Activated CD4-positive, alpha-beta T cell treated with anti-CD3 and anti-CD28 coated beads, Interleukin-2, amount 10 ng/mL, durations not matched to agents 24 days and 14 days (primary cell): ENCODE measurements at regions of chr12 and their contacts with region 1.

Region 1: DNA sequence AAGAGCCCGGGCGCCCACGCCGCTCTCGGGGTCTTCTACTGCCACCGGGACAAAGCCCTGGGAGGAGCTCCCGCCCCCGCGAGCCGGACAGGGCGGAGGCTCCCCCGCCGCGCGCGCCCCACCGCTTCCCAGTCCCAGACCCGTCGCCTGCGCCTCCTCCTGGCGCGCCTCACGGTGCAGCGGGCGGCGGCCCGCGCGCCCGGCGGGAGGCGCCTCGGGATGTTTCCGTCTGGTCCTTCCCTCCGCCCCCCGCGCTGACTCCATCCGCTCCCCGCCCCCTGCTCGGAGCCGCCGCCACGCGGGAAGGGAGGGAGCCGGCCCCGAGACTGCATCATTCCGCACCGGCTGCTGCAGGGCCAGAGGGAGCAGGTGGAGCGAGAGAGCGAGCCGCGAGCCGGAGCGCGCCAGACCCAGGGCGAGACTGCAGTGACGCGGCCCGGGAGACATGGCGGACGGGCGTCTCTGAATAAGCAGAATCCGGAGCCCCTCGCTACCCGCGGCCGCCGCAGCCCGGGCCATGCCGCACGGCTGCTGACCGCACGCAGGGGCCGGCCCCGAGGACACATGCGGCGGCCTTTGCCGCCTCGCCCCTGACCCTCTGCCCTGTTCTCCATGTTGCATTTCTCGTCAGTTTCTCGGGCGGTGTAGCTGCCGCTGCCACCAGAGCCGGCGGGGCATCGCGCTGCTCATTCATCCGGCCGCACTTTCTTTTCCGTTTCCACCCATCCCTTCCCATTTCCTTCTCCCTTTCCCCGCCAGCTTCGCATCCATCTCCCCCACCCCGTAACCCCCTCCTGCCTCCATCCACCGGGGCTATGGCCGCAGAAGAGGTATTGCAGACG is at the start of gene BICD1:
- DNase-seq: peak; percentile 94
- H3K4me3 Mint-ChIP-seq: peak within 1 kb of the TSS; percentile 99
- H3K27ac Mint-ChIP-seq: peak within 1 kb of the TSS; percentile 92
- H3K4me1 Mint-ChIP-seq: peaks cover 23% of the 10 kb centered on the region
- H3K27me3 Mint-ChIP-seq: peaks cover 14% of the 10 kb centered on the region
- total RNA-seq, gene BICD1: 16.0 and 18.2 TPM in 2 replicates

Region 2: GRCh38 chr12:31585271-31585670 is 521.5 kb before region 1 on chr12:
- intact Hi-C with region 1: no loop called
- DNase-seq: no peak
- H3K4me3 Mint-ChIP-seq: no peak overlapping the region
- H3K27ac Mint-ChIP-seq: no peak overlapping the region
- H3K4me1 Mint-ChIP-seq: peaks cover 4% of the 10 kb centered on the region
- H3K27me3 Mint-ChIP-seq: peaks cover 43% of the 10 kb centered on the region

Region 3: GRCh38 chr12:31659087-31659933 is 447.4 kb before region 1 on chr12 and contains the start of gene ETFBKMT:
- intact Hi-C with region 1: loop called (anchors 1 kb)
- DNase-seq: peak; percentile 98
- H3K4me3 Mint-ChIP-seq: peak within 1 kb of the TSS; percentile 93
- H3K27ac Mint-ChIP-seq: peak within 1 kb of the TSS; percentile 99
- H3K4me1 Mint-ChIP-seq: peaks cover 15% of the 10 kb centered on the region
- H3K27me3 Mint-ChIP-seq: no peaks in the 10 kb centered on the region
- total RNA-seq, gene ETFBKMT: 0.52 and 0.84 TPM in 2 replicates

Region 4: DNA sequence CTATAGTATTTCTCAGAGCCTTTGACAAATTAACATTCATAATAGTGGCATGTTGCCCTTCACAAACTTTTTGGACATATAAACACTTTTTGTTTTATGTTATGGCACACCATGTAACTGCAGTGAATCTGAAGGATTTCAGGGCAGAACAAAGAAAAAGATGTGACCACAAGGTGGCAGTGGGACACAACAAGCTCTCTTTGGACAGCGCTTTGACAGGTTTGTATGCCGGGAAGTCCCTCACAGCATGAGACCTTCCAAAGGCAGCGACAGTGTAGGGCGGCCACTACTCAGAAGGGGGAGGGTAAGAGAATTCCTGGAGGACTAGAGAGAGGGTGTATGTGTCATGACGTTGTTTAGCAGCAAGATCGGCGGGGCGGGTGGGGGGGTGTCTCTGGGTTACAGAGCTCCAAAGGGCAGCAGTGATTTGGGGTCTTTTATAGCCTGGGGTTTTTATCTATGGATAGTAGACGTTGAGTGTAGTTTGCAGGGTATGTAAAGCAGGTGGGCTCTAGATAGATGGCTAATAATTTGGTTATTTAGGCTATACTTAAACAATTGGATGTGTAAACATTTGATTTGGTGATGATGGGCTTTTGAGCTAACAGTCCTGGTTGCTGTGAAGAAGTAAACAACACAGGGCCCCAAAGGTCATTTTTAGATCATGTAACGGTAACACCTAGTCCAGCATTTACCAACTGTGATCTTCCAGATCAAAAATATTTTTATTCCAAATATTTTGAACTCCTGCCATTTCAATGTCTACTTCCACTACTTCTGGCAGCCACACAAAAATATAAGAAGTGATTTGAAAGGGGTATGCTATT is 424.4 kb before region 1 on chr12:
- intact Hi-C with region 1: loop called (anchors 5 kb)
- DNase-seq: peak; percentile 91
- H3K4me3 Mint-ChIP-seq: no peak overlapping the region
- H3K27ac Mint-ChIP-seq: peak overlapping the region; percentile 54
- H3K4me1 Mint-ChIP-seq: peaks cover 10% of the 10 kb centered on the region
- H3K27me3 Mint-ChIP-seq: no peaks in the 10 kb centered on the region

Region 5: DNA sequence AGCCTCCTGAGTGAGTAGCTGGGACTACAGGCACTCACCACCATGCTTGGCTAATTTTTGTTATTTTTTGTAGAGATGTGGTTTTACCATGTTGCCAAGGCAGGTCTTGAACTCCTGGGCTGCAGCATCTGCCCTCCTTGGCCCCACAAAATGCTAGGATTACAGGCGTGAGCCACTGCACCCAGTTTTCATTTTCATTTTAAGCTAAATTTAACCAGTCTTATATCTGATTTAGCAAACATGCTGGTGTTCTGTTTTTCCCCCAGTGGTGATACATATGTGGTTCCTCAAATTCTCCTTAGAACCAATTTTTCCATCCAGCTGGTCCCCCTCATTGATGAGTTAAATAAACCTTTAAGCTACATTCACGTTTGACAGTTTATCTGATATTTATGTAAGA is 43.9 kb before region 1 on chr12:
- intact Hi-C with region 1: loop called (anchors 2 kb)
- DNase-seq: no peak
- H3K4me3 Mint-ChIP-seq: no peak overlapping the region
- H3K27ac Mint-ChIP-seq: no peak overlapping the region
- H3K4me1 Mint-ChIP-seq: peaks cover 11% of the 10 kb centered on the region
- H3K27me3 Mint-ChIP-seq: no peaks in the 10 kb centered on the region

Region 6: DNA sequence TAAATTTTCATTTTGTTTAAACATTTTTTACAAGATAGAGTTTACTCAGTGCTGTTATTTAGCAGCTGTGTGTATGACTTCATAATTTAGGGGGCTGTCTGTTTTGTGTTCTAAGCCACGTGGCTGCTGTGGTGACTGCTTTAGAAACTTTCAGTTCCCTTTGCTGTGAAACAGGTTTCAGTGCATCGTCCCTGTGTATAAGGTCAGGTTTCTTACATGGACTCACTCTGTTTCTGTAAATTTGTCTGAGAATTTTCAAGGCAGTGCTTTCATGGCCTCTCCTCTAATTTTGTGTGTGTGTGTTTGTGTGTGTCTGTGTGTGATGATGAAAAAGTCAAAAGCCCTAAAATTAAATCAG is 32.3 kb after region 1 on chr12:
- intact Hi-C with region 1: loop called (anchors 1 kb)
- DNase-seq: peak; percentile 79
- H3K4me3 Mint-ChIP-seq: peak overlapping the region; percentile 70
- H3K27ac Mint-ChIP-seq: peak overlapping the region; percentile 1
- H3K4me1 Mint-ChIP-seq: peaks cover 18% of the 10 kb centered on the region
- H3K27me3 Mint-ChIP-seq: peaks cover 14% of the 10 kb centered on the region

Region 7: DNA sequence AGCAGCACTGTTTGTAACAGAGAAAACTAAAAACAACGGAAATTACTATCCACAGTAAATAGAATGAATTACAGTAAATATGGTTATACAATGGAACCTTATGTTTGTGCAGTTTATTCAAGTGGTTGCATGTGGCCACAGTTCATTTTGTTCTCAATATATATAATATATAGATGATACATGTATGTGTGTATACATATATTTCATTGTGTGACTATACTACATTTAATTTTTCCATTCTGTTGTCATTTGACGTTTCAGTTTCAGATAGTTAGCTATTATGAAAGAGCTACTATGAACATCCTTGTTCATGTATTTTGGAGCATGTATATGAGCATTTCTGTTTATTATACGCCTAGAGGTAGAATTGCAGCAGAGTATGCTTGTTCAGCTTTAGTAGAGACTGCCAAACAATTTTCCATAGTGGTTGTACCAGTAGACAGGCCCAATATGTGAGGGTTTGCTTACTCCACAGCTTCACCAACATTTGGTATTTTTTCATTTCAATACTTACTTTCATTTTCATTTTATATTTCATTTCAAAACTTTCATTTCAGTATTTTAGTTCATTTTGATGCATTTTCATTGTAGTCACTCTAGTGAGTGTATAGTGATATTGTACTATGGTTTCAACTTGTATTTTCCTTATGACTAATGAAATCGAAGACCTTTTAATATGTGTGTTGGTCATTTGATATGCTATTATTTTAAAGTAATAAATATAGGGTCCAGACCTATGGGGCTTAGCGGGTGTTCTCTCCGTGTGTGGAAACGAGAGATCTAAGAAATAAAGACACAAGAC is 151.2 kb after region 1 on chr12:
- intact Hi-C with region 1: loop called (anchors 5 kb)
- DNase-seq: no peak
- H3K4me3 Mint-ChIP-seq: no peak overlapping the region
- H3K27ac Mint-ChIP-seq: no peak overlapping the region
- H3K4me1 Mint-ChIP-seq: peaks cover 5% of the 10 kb centered on the region
- H3K27me3 Mint-ChIP-seq: no peaks in the 10 kb centered on the region

Region 8: DNA sequence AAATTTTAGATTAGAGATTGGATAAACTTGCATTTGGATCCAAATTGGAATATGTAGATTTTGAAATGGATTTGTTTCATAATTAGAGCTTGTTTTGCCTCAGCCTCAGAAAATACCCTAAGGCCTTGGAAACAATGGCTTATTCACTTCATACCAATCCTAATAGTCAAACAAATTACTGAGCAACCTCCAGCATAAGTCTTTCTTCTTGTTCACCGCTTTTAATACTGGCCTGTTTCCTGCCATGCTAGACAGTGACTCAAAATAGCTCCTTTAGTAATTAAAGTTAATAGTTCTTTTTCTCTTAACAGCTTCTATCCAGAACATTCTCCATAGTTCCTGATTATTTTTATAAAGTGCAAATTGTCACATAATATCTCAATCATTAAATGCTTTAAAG is 461.5 kb after region 1 on chr12:
- intact Hi-C with region 1: no loop called
- DNase-seq: no peak
- H3K4me3 Mint-ChIP-seq: no peak overlapping the region
- H3K27ac Mint-ChIP-seq: no peak overlapping the region
- H3K4me1 Mint-ChIP-seq: peaks cover 5% of the 10 kb centered on the region
- H3K27me3 Mint-ChIP-seq: no peaks in the 10 kb centered on the region

Region 9: DNA sequence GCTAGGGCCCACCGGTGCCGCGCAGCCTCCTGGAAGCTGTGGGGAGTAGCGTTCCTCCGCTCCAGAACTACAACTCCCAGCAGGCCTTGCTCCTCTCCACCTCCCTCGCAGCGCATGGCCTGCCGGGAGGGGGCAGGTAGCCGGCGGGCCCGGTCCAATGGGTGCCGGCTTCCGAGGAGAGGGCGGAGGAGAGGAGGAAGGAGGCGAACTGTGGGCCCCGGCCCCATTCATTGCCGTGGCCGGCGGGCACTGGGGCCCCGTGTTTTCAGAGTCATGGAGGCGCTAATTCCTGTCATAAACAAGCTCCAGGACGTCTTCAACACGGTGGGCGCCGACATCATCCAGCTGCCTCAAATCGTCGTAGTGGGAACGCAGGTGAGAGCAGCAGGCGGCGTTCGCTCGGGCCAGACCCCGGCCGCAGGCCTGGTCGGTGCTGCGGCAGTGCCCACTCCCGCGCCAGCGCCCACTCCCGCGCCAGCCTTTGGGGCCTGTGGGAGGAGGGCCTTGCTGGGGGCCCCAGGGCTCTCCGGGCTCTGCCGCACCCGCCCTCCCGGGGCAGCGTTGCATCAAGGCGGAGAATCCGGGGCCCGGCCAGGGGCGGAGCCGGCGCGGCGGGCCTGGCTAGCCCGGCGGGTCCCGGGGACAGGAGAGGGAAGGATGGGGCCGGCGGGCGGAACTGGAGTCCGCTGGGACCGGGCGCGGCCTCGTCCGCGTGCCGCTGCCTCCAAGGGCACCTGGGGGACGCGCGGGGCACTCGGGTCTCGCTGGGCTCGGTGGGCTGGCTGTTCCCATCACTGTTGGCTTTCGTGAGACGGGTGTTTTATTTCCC is 572.6 kb after region 1 on chr12 and contains the start of gene DNM1L:
- intact Hi-C with region 1: loop called (anchors 5 kb)
- DNase-seq: peak; percentile 98
- H3K4me3 Mint-ChIP-seq: peak within 1 kb of the TSS; percentile 88
- H3K27ac Mint-ChIP-seq: peak within 1 kb of the TSS; percentile 93
- H3K4me1 Mint-ChIP-seq: peaks cover 21% of the 10 kb centered on the region
- H3K27me3 Mint-ChIP-seq: no peaks in the 10 kb centered on the region
- total RNA-seq, gene DNM1L: 83.3 and 90.7 TPM in 2 replicates